H1 (cell line): ENCODE measurements at regions of chr16 and their contacts with region 1.

Region 1: DNA sequence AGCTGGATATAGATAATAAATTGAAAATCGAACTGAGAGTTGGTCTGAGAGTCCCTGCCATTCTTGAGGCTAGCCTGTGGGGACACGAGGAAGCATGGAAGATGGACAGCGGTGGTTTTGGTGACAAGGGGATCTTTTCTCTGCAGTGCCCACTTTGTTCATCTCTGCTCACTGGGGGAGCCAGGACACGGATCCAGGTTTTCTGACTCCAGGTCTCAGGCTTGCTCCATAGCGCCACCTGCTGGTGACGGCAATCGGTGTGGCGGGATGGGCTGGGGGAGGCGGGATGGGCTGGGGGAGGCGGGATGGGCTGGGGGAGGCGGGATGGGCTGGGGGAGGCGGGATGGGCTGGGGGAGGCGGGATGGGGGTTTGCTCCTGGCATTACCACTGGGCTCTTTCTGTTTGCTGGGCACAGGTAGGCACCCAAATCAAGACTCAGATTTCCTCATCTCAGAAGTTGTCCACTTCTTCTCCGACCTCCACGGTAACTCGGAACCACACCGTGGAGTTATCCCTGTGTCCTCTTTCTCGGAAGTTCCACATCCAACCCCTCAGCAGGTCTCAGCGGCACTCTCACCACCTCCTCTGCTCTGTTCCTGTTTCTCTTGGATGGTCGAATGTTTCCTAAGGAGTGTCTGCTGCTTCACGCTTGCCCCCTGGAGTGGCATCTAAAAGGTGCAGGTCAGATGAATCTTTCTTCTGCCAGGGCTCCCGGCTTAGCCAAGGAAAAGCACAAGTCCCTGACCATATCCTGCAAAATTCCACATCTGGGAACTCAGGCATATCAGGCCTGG is 142.4 kb downstream of the CYLD start:
- DNase-seq: peak in 1 of 2 experiments; percentile 94
- H3K4me3 ChIP-seq: no peak overlapping the region; a peak in 1 of 8 replicates
- H3K27ac ChIP-seq: no peak overlapping the region
- H3K4me1 ChIP-seq: peaks cover 0 to 3% (median 2%) of the 10 kb centered on the region in 4 experiments; a peak in 3 of 7 replicates
- H3K27me3 ChIP-seq: peaks cover 0 to 3% (median 0%) of the 10 kb centered on the region in 4 experiments; a peak in 1 of 7 replicates
- CTCF ChIP-seq: peak; percentile 59 to 84 (median 71)
- EP300 ChIP-seq: no peak
- POLR2A ChIP-seq: no peak
- RAD21 ChIP-seq: peak; percentile 53 to 65

Region 2: DNA sequence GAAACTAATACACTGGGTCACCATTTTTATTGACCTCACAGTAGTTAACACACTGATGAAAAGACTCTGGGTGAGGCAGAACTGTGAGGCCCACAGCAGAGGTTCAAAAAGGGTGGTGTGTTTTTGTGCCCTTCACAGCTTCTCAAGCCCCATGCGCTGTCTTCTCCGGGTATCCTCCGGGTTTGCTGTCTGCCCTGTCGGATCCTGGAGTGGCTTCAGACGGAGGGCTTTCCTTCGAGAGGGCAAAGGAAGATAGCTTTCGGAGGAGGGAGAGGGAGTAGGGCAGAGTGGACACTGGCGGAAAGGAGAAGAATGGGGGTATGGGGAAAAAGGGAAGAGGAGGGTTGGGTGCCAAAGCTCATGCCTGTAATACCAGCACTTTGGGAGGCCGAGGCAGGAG is 61.6 kb before region 1 on chr16:
- CTCF ChIA-PET with region 1: no interaction called
- POLR2A ChIA-PET with region 1: no interaction called
- DNase-seq: no peak
- H3K4me3 ChIP-seq: no peak overlapping the region
- H3K27ac ChIP-seq: no peak overlapping the region
- H3K4me1 ChIP-seq: no peaks in the 10 kb centered on the region
- H3K27me3 ChIP-seq: no peaks in the 10 kb centered on the region
- CTCF ChIP-seq: no peak
- EP300 ChIP-seq: no peak
- POLR2A ChIP-seq: no peak
- RAD21 ChIP-seq: no peak

Region 3: GRCh38 chr16:50906454-50906853 is 22.2 kb after region 1 on chr16:
- CTCF ChIA-PET with region 1: interaction called, 13 read pairs
- POLR2A ChIA-PET with region 1: no interaction called
- DNase-seq: no peak
- H3K4me3 ChIP-seq: no peak overlapping the region
- H3K27ac ChIP-seq: no peak overlapping the region
- H3K4me1 ChIP-seq: peaks cover 0 to 2% (median 0%) of the 10 kb centered on the region in 4 experiments; a peak in 1 of 7 replicates
- H3K27me3 ChIP-seq: no peaks in the 10 kb centered on the region
- CTCF ChIP-seq: no peak
- EP300 ChIP-seq: no peak
- POLR2A ChIP-seq: no peak
- RAD21 ChIP-seq: no peak